PC-3 (cell line): ENCODE measurements at regions of chr3 and their contacts with region 1.

Region 1: DNA sequence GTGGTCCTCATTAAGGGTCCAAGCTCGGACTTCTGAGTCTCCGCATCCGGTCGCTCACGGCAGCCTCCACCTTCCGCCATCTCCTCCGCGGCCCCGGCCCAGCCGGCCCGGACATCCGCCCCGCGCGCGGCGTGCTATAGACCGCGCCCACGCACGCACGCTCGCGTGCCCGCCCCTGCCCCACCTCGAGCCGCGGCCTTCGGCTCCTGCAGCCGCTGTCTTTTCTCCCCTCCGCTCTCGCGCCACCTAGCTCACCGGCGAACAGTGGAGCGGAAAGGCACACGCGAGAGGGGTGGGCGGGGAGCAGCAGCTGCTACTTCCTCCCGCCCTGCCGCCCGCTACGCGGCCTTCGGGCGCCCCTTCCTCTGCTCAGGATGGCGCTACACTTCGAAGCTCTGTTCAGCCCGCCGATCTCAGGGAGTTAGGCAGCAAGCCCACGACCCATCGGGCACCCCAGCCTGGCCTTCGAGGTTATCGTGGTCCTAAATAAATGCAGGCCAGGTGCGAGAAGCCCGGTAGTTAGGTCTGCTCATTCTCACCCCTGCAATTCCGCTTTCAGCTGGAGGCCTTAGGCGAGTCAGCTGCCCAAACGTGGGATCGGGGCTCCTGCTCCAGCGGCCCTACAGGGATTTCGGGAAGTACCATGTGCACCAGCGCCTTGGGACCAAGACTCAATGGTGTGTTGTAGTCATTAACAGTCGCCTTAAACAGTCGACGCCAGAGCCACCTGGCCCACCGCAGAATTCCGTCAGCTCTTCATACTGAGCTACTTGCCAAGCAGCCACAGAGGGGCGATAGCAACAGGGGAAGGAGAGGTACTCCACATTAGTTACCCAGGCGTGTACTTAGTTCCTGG is at the start of gene USP4:
- DNase-seq: peak; percentile 92
- ATAC-seq: peak; percentile 96
- H3K4me3 ChIP-seq: peak within 1 kb of the TSS; percentile 88
- H3K27ac ChIP-seq: peak within 1 kb of the TSS; percentile 32
- H3K4me1 ChIP-seq: peaks cover 19% of the 10 kb centered on the region
- H3K27me3 ChIP-seq: no peaks in the 10 kb centered on the region
- CTCF ChIP-seq: peak; percentile 33; the same call in 1 of the 2 replicates
- total RNA-seq, gene USP4: 19.9 and 22.8 TPM in 2 replicates

Region 2: GRCh38 chr3:49298511-49298910 is 41.7 kb before region 1 on chr3:
- CTCF ChIA-PET with region 1: no interaction called
- POLR2A ChIA-PET with region 1: no interaction called
- intact Hi-C with region 1: no loop called
- DNase-seq: no peak
- ATAC-seq: peak; percentile 75
- H3K4me3 ChIP-seq: no peak overlapping the region
- H3K27ac ChIP-seq: no peak overlapping the region
- H3K4me1 ChIP-seq: 0 out of 2 replicates have a peak, but pooled peaks cover 3% of the 10 kb centered on the region
- H3K27me3 ChIP-seq: no peaks in the 10 kb centered on the region
- CTCF ChIP-seq: no peak

Region 3: DNA sequence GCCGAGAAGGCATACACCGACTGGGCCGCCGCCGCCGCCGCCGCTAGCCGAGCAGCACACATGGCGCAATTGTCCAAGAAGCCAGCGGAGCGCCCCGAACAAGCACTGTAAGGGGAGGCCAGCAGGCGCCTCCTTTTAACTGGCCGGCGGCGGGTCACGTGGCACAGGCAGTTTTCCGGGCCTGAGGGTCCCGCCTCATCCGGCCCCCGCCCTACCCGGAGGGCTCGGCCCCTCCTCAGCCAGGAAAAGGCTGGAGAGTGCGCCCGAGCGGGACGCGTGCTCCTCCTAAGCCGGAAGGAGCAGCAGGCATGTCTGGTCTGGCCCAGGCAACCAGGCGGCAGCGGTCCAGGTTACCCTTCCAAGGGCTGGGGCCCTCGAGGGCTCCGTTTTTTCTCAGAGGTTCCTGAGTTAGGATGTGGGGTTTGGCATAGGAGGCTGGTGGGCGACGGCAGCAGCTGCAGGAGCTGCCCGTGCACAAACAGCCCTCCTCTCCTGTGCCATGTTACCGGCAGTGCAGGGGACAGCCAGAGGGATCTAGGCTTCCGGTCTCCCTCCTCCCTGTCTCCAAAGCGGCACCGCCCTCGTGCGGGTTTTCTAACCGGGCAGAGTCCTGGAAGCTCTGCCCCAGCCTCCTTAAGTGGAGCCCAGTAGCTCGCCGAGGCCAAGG is 18.2 kb after region 1 on chr3 and contains the start of gene GPX1:
- CTCF ChIA-PET with region 1: interaction called, 4 read pairs
- POLR2A ChIA-PET with region 1: interaction called, 9 read pairs
- intact Hi-C with region 1: loop called (anchors 2 kb)
- DNase-seq: peak; percentile 98
- ATAC-seq: peak; percentile 87
- H3K4me3 ChIP-seq: peak within 1 kb of the TSS; percentile 87
- H3K27ac ChIP-seq: peak within 1 kb of the TSS; percentile 90
- H3K4me1 ChIP-seq: peaks cover 25% of the 10 kb centered on the region
- H3K27me3 ChIP-seq: no peaks in the 10 kb centered on the region
- CTCF ChIP-seq: no peak
- total RNA-seq, gene GPX1: 714 and 745 TPM in 2 replicates